ENCODE measurements at regions of chr13 and their contacts with region 1.

Region 1: DNA sequence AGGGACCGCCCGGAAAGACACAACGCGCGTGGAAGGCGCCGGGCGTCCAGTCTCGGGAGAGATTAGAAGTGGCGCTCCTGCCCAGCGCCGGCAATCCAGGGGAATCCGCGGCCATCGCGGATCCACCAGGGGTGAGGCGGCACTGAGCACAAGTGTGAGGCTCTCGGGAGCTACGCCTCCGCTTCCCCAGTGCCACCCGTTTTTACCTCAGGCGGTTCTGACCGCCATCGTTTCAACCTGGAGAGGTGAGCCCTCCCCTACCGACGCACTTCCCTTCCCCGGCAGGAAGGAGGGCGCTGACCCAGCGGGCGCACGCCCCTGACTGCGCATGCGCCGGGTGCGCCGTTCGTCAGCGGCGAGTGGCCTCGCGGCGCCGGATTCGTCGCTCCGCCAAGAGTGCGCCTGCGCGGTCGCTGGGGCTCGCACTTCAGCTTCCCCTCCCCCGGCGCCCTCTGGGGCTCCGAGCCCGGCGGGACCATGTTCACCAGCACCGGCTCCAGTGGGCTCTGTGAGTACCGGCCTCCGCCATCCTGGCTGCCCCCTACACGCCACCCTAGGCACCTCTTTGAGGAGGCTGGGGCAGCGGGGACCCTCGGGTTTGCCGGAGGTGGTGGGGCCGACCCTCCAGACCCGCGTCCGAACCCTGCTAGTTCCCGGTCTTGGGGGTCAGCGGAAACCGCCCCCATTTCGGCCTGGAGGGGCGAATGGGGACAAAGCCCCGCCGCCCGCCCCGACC is at the start of gene UBAC2:
- DNase-seq: peak; percentile 98
- ATAC-seq: peak; percentile 77
- H3K4me3 Mint-ChIP-seq: peak within 1 kb of the TSS; percentile 82
- H3K27ac Mint-ChIP-seq: peak within 1 kb of the TSS; percentile 97
- H3K4me1 Mint-ChIP-seq: peaks cover 62% of the 10 kb centered on the region
- H3K27me3 Mint-ChIP-seq: no peaks in the 10 kb centered on the region
- total RNA-seq, gene UBAC2: 48.4 to 56.3 TPM

Region 2: GRCh38 chr13:99033814-99034213 is 166.8 kb before region 1 on chr13:
- CTCF ChIA-PET with region 1: no interaction called
- POLR2A ChIA-PET with region 1: no interaction called
- intact Hi-C with region 1: loop called in 1 of 2 experiments (anchors 5 kb)
- DNase-seq: no peak
- ATAC-seq: peak; percentile 56
- H3K4me3 Mint-ChIP-seq: no peak overlapping the region
- H3K27ac Mint-ChIP-seq: no peak overlapping the region
- H3K4me1 Mint-ChIP-seq: peaks cover 51% of the 10 kb centered on the region
- H3K27me3 Mint-ChIP-seq: no peaks in the 10 kb centered on the region

Region 3: GRCh38 chr13:99214232-99214631 is 13.6 kb after region 1 on chr13:
- CTCF ChIA-PET with region 1: interaction called, 16 read pairs
- POLR2A ChIA-PET with region 1: interaction called, 25 read pairs
- intact Hi-C with region 1: loop called (anchors 1 kb)
- DNase-seq: peak; percentile 82
- ATAC-seq: peak; percentile 80
- H3K4me3 Mint-ChIP-seq: peak overlapping the region; percentile 74
- H3K27ac Mint-ChIP-seq: peak overlapping the region; percentile 87
- H3K4me1 Mint-ChIP-seq: peaks cover 79% of the 10 kb centered on the region
- H3K27me3 Mint-ChIP-seq: no peaks in the 10 kb centered on the region

Region 4: GRCh38 chr13:99258210-99258860 is 57.7 kb after region 1 on chr13 and contains the start of gene GPR18:
- CTCF ChIA-PET with region 1: interaction called, 19 read pairs
- POLR2A ChIA-PET with region 1: interaction called, 10 read pairs
- intact Hi-C with region 1: loop called (anchors 1 kb)
- DNase-seq: peak; percentile 62
- ATAC-seq: peak; percentile 88
- H3K4me3 Mint-ChIP-seq: peak within 1 kb of the TSS; percentile 80
- H3K27ac Mint-ChIP-seq: peak within 1 kb of the TSS; percentile 95
- H3K4me1 Mint-ChIP-seq: peaks cover 76% of the 10 kb centered on the region
- H3K27me3 Mint-ChIP-seq: no peaks in the 10 kb centered on the region
- total RNA-seq, gene GPR18: 6.0 to 9.5 TPM

Region 5: DNA sequence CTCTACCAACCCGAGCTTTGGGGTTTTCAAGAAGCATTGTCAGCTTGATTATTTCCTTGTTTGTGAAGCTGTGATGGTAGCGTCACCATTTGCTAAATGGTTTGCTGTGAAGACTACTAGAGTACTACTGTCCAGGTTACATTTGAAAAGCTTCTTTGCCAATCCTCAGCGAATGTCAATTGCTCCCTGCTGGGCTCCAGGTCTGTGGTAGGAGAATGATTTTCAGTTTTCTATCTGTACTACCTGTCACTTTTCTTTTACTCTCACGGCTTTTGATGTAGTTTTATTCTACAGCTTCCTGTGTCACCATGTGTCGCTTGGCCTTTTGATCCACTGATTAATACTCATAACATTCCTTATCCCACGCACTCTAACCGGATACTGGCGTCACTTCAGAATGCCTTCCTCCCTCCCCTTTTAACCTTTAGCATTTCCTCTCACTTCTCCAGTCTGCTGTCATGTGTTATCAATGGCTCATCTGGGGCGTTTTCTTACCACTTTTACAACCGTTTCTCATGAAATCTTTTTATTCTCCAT is 114.1 kb after region 1 on chr13:
- CTCF ChIA-PET with region 1: no interaction called
- POLR2A ChIA-PET with region 1: interaction called, 5 read pairs
- intact Hi-C with region 1: loop called in 1 of 2 experiments (anchors 2 kb)
- DNase-seq: peak; percentile 85
- ATAC-seq: peak; percentile 76
- H3K4me3 Mint-ChIP-seq: peak overlapping the region; percentile 60
- H3K27ac Mint-ChIP-seq: peak overlapping the region; percentile 96
- H3K4me1 Mint-ChIP-seq: peaks cover 88% of the 10 kb centered on the region
- H3K27me3 Mint-ChIP-seq: no peaks in the 10 kb centered on the region

Region 6: GRCh38 chr13:99417201-99418102 is 216.9 kb after region 1 on chr13:
- CTCF ChIA-PET with region 1: interaction called, 3 read pairs
- POLR2A ChIA-PET with region 1: interaction called, 3 read pairs
- intact Hi-C with region 1: loop called in 1 of 2 experiments (anchors 5 kb)
- DNase-seq: peak; percentile 57
- ATAC-seq: peak; percentile 2
- H3K4me3 Mint-ChIP-seq: no peak overlapping the region
- H3K27ac Mint-ChIP-seq: no peak overlapping the region
- H3K4me1 Mint-ChIP-seq: peaks cover 62% of the 10 kb centered on the region
- H3K27me3 Mint-ChIP-seq: no peaks in the 10 kb centered on the region

Region 7: DNA sequence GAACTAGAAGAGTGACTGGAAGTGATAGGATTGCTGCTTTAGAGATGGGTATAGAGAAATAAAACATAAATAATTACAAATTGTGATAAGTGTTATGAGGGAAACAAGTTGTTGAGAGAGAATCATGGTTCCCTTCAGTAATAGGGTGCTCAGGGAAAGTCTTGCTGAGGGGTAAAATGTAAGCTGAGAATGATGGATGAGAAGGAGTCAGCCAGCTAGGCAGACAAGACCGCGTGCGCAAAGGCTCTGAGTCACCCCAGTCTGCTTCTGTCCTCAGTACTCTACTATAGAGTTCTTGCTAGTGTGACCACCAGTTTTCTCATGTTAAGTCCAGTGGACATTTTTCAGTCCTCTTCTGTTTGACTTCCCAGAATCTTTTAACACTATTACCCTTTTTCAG is 927.8 kb after region 1 on chr13:
- CTCF ChIA-PET with region 1: no interaction called
- POLR2A ChIA-PET with region 1: no interaction called
- intact Hi-C with region 1: no loop called
- DNase-seq: peak; percentile 47
- ATAC-seq: no peak
- H3K4me3 Mint-ChIP-seq: no peak overlapping the region
- H3K27ac Mint-ChIP-seq: no peak overlapping the region
- H3K4me1 Mint-ChIP-seq: peaks cover 14% of the 10 kb centered on the region
- H3K27me3 Mint-ChIP-seq: no peaks in the 10 kb centered on the region

Measured in activated CD4-positive, alpha-beta T cell treated with anti-CD3 and anti-CD28 coated beads for 36 hours (primary cell).